CD8-positive, alpha-beta T cell (primary cell): ENCODE measurements at regions of chr10 and their contacts with region 1.

Region 1: DNA sequence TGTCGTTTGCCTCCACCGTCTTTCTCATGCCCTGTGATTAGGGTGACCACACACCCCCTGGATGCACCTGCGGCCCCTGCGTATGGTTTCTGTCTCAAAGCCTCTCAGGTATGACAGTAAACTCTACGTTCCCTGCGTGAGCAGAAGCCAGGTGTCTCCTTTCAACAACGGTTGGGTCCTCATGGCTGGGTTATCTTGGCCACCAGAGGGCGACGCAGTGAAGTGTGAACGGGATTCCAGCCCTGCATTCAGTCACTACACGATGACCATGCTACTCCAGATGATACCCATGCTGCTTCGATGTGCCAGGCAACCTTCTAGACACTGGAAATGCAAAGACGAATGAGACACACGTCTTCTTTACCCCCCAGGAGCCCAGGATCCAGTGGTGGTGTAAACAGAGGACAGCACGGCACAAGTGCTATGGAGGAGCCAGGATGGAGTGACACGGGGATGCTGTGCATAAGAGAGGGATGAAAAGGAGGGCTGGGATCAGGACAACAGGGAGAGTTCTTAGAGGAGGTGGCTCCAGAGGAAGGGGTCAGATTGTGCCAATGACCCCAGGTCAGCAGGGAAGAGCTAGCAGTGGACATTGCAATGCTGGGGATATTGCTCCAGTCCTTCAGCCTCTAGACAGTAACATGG is 228.1 kb upstream of the PFKP start:
- DNase-seq: peak in 3 of 9 experiments; percentile 12 to 20 (median 12)
- ATAC-seq: no peak
- H3K4me3 ChIP-seq: no peak overlapping the region
- H3K4me3 Mint-ChIP-seq: no peak overlapping the region
- H3K27ac ChIP-seq: no peak overlapping the region
- H3K27ac Mint-ChIP-seq: no peak overlapping the region
- H3K4me1 ChIP-seq: no peaks in the 10 kb centered on the region
- H3K4me1 Mint-ChIP-seq: no peaks in the 10 kb centered on the region
- H3K27me3 ChIP-seq: no peaks in the 10 kb centered on the region
- H3K27me3 Mint-ChIP-seq: peaks cover 17% of the 10 kb centered on the region
- CTCF ChIP-seq: no peak

Region 2: DNA sequence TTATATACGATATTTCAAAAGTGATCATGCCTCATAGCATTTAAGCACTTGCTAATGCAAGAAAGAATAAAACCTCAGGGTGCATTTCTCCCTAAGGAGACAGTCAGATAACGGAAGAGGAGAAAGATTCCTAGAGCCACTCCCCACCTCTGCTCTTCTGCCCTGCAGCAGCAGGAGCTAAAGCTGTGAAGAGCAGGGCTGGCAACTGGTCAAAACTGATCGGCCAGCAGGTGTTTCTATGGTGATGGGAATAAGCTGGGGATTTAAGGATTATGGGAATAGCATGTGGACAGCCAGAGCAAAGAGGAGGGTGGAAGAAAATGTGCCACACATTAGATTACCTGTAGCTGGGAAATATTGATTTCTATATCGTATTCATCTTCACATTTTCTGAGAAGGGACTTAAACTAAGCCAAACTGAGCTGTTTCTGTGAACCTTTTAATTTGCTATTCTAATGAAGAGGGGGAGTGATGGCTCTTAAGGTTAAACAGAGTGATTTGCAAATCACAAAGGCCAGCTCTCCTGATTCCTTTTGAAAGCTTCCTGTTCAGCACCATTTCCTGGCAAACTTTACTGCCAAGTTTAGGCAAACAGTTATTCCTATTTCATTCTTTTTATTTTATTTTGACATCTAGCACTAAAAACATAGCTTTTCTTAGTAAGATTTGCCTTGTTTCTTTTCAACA is 40.7 kb before region 1 on chr10:
- CTCF ChIA-PET with region 1: no interaction called
- POLR2A ChIA-PET with region 1: no interaction called
- intact Hi-C with region 1: no loop called
- DNase-seq: no peak
- ATAC-seq: no peak
- H3K4me3 ChIP-seq: no peak overlapping the region
- H3K4me3 Mint-ChIP-seq: no peak overlapping the region
- H3K27ac ChIP-seq: no peak overlapping the region
- H3K27ac Mint-ChIP-seq: no peak overlapping the region
- H3K4me1 ChIP-seq: no peaks in the 10 kb centered on the region
- H3K4me1 Mint-ChIP-seq: no peaks in the 10 kb centered on the region
- H3K27me3 ChIP-seq: no peaks in the 10 kb centered on the region
- H3K27me3 Mint-ChIP-seq: peaks cover 9% of the 10 kb centered on the region
- CTCF ChIP-seq: no peak

Region 3: GRCh38 chr10:2897619-2898508 is 58.7 kb after region 1 on chr10:
- CTCF ChIA-PET with region 1: no interaction called
- POLR2A ChIA-PET with region 1: no interaction called
- intact Hi-C with region 1: no loop called
- DNase-seq: peak in 1 of 9 experiments; percentile 10
- ATAC-seq: no peak
- H3K4me3 ChIP-seq: no peak overlapping the region
- H3K4me3 Mint-ChIP-seq: no peak overlapping the region
- H3K27ac ChIP-seq: no peak overlapping the region
- H3K27ac Mint-ChIP-seq: no peak overlapping the region
- H3K4me1 ChIP-seq: no peaks in the 10 kb centered on the region
- H3K4me1 Mint-ChIP-seq: no peaks in the 10 kb centered on the region
- H3K27me3 ChIP-seq: no peaks in the 10 kb centered on the region
- H3K27me3 Mint-ChIP-seq: peaks cover 3% of the 10 kb centered on the region
- CTCF ChIP-seq: no peak

Region 4: DNA sequence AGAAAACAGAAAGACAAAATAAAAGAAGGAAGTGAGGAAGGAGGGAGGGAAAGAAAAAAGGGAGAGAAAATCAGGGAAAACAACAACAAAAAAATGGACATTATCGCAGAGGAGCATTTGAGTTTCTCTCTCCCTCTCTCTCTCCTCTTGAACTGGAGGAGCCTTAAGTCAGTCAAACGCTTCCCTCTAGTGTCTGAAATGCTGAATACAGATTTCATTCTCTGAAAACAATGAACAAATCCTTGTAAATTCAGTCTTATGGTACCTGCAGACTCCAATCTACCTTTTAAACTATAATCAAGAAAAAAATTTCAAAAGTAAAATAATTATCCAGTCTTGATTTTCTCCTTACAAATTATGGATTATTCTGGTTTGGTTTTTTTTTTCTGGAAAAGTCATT is 138.9 kb after region 1 on chr10:
- CTCF ChIA-PET with region 1: no interaction called
- POLR2A ChIA-PET with region 1: no interaction called
- intact Hi-C with region 1: loop called in 1 of 2 experiments (anchors 5 kb)
- DNase-seq: peak in 2 of 9 experiments; percentile 15 to 44
- ATAC-seq: no peak
- H3K4me3 ChIP-seq: no peak overlapping the region
- H3K4me3 Mint-ChIP-seq: no peak overlapping the region
- H3K27ac ChIP-seq: no peak overlapping the region
- H3K27ac Mint-ChIP-seq: no peak overlapping the region
- H3K4me1 ChIP-seq: no peaks in the 10 kb centered on the region
- H3K4me1 Mint-ChIP-seq: no peaks in the 10 kb centered on the region
- H3K27me3 ChIP-seq: no peaks in the 10 kb centered on the region
- H3K27me3 Mint-ChIP-seq: peaks cover 6% of the 10 kb centered on the region
- CTCF ChIP-seq: peak; percentile 42